ENCODE measurements at regions of chr4 and their contacts with region 1.

Region 1: GRCh38 chr4:139501927-139502899 is 48.3 kb downstream of the RAB33B start:
- DNase-seq: no peak
- ATAC-seq: no peak
- H3K4me3 Mint-ChIP-seq: no peak overlapping the region
- H3K27ac Mint-ChIP-seq: no peak overlapping the region
- H3K4me1 Mint-ChIP-seq: peaks cover 14% of the 10 kb centered on the region
- H3K27me3 Mint-ChIP-seq: no peaks in the 10 kb centered on the region

Region 2: GRCh38 chr4:139315221-139315675 is 187.0 kb before region 1 on chr4:
- CTCF ChIA-PET with region 1: no interaction called
- DNase-seq: no peak
- ATAC-seq: no peak
- H3K4me3 Mint-ChIP-seq: no peak overlapping the region
- H3K27ac Mint-ChIP-seq: peak overlapping the region; percentile 78
- H3K4me1 Mint-ChIP-seq: peaks cover 61% of the 10 kb centered on the region
- H3K27me3 Mint-ChIP-seq: no peaks in the 10 kb centered on the region

Region 3: DNA sequence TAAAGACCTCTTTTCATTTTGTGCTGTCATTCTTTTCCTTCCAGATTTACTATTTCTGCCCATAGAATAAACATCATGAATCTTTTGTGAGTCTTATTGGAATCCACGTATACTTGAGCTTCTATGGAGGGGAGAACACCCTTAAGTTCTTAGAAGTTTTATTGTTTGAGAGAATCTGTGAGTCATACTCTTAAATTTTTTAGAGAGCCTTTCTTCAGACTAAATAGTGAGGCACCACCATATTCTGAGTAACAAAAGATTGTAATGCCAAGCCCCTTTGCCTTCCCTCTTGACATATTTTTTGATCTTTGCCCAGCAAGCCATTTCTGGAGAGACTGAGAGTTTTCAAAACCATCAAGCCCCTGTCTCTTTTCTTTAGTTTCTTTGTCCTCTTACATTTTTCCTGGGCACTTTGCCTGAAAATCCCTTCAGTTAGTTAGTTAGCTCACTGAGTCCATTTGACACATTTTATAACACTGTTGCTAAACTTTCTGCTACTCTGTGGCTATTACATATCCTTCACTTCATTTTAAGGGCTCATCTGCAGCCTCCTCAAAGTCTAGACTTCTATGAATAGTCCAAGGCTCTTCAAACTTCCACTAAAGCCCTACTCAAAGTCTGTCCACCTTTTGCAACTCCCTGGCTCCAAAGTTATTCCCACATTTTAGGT is 134.7 kb before region 1 on chr4:
- CTCF ChIA-PET with region 1: no interaction called
- DNase-seq: no peak
- ATAC-seq: no peak
- H3K4me3 Mint-ChIP-seq: no peak overlapping the region
- H3K27ac Mint-ChIP-seq: peak overlapping the region; percentile 68
- H3K4me1 Mint-ChIP-seq: peaks cover 5% of the 10 kb centered on the region
- H3K27me3 Mint-ChIP-seq: no peaks in the 10 kb centered on the region

Region 4: DNA sequence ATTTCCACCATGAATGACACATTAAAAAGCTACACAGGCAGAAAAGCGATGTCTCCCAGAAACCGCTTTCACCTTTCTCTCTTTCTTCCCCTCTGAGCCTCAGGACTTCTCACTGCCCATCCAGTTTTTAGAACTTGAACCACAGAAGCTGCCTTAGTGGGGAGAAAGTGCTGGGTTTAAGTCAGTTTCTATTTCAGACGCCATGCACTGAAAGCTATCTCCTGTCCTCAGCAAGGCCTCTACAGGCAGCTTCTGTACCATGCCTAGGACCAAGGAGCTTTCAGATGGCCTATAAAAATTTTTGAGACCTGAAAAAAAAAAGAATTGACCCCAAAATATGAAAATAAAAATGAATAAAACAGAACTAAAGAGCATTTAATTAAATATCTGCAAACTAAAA is 13.8 kb before region 1 on chr4:
- CTCF ChIA-PET with region 1: interaction called, 11 read pairs
- DNase-seq: no peak
- ATAC-seq: no peak
- H3K4me3 Mint-ChIP-seq: no peak overlapping the region
- H3K27ac Mint-ChIP-seq: no peak overlapping the region
- H3K4me1 Mint-ChIP-seq: no peaks in the 10 kb centered on the region
- H3K27me3 Mint-ChIP-seq: no peaks in the 10 kb centered on the region

Region 5: DNA sequence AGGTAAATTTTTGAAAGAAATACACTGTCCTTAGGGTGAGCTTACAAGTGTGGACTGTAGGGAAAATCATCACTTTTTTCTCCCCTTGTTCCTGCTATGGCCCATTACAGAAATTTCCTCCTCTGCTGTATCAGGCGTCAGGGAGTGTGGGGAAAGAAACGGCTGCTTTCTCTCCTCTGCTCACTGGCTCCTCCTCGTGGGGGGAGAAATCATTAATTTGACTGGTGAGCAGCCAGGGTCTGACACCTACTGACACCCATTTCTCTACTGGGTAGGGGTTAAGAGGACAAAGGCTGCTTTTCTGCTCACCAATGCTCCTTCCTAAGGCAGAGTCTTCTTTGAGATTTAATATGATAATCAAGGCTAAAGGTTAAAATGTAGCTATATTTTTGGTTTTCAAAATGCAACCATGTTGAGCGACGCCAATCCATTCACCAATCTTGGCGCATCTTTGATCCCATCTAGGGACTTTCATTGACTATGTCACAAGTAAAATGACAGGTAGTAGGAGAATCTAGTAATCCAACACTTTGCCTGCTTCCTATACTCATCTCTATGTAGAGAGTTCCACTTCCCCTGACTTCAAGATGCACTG is 28.7 kb after region 1 on chr4:
- CTCF ChIA-PET with region 1: interaction called, 22 read pairs
- DNase-seq: peak; percentile 63
- ATAC-seq: peak; percentile 75
- H3K4me3 Mint-ChIP-seq: no peak overlapping the region
- H3K27ac Mint-ChIP-seq: no peak overlapping the region
- H3K4me1 Mint-ChIP-seq: peaks cover 28% of the 10 kb centered on the region
- H3K27me3 Mint-ChIP-seq: no peaks in the 10 kb centered on the region

Measured in activated CD8-positive, alpha-beta memory T cell treated with anti-CD3 and anti-CD28 coated beads, Interleukin-2, amount 10 ng/mL, durations not matched to agents 7 days and 5 days (primary cell).